Common myeloid progenitor, CD34-positive (primary cell): ENCODE measurements at regions of chr4 and their contacts with region 1.

Region 1: GRCh38 chr4:105208561-105208960 is 61.9 kb downstream of the TET2 start:
- DNase-seq: no peak
- H3K4me3 ChIP-seq: no peak overlapping the region
- H3K27ac ChIP-seq: no peak overlapping the region
- H3K4me1 ChIP-seq: no peaks in the 10 kb centered on the region
- H3K27me3 ChIP-seq: no peaks in the 10 kb centered on the region

Region 2: DNA sequence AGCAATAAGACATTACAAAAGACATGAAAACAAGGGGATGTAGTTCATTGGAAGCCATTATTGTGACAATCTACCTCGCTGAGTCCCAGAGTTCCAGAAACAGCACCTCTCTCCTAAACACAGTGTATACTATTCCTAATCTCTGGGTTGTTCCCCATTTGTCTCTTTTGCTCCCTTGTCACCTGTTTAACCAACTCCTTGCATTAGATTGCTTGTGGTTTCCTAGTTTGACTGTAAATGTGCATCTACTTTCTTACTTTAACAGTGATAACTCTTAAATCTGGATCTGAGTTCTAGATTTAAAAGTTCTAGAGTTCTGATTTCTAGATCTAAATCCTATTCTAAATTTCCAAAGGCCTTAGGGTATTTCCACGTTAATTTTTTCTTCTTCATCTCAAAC is 133.5 kb before region 1 on chr4:
- CTCF ChIA-PET with region 1: no interaction called
- POLR2A ChIA-PET with region 1: no interaction called
- DNase-seq: no peak
- H3K4me3 ChIP-seq: no peak overlapping the region
- H3K27ac ChIP-seq: no peak overlapping the region
- H3K4me1 ChIP-seq: no peaks in the 10 kb centered on the region
- H3K27me3 ChIP-seq: no peaks in the 10 kb centered on the region

Region 3: DNA sequence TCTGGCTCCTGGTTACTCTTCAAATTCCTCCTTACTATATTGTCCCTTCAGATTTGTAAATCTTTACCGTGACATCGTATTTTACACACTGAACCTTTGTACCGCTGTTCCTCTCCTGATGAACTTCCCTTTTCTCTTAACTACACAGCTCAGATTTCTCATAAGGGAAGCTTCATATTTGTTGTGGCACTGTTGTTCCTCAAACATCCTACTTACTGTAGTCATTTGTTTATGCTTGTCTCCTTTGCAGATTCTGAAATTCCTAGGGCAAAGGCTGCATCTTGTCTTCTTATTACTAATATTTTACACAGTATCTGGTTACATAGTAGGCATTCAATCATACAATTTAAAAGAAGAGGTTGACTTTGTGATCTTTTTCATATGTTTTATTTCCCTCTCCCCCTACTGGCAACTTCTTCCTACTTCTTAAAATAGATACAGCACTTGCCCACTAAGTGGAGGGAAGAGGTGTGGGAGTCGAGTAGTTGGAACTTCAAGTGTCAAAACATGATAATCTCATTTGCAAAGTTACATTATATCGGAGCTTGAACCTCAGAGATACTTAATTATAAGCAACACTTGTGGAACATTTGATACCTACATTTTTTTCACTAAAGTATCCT is 11.9 kb before region 1 on chr4:
- CTCF ChIA-PET with region 1: interaction called, 16 read pairs
- POLR2A ChIA-PET with region 1: no interaction called
- DNase-seq: peak; percentile 55 to 87 (median 80)
- H3K4me3 ChIP-seq: peak overlapping the region in 4 of 7 experiments; percentile 19 to 47 (median 22)
- H3K27ac ChIP-seq: no peak overlapping the region
- H3K4me1 ChIP-seq: peaks cover 2 to 35% (median 21%) of the 10 kb centered on the region in 4 experiments
- H3K27me3 ChIP-seq: no peaks in the 10 kb centered on the region

Region 4: GRCh38 chr4:105657117-105657765 is 448.7 kb after region 1 on chr4:
- CTCF ChIA-PET with region 1: no interaction called
- POLR2A ChIA-PET with region 1: no interaction called
- DNase-seq: no peak
- H3K4me3 ChIP-seq: no peak overlapping the region
- H3K27ac ChIP-seq: no peak overlapping the region
- H3K4me1 ChIP-seq: no peaks in the 10 kb centered on the region
- H3K27me3 ChIP-seq: no peaks in the 10 kb centered on the region